GM13977 (cell line): ENCODE measurements at regions of chr21 and their contacts with region 1.

Region 1: GRCh38 chr21:30463713-30464112 is 16.5 kb downstream of the KRTAP19-1 start:
- DNase-seq: no peak
- CTCF ChIP-seq: no peak

Region 2: DNA sequence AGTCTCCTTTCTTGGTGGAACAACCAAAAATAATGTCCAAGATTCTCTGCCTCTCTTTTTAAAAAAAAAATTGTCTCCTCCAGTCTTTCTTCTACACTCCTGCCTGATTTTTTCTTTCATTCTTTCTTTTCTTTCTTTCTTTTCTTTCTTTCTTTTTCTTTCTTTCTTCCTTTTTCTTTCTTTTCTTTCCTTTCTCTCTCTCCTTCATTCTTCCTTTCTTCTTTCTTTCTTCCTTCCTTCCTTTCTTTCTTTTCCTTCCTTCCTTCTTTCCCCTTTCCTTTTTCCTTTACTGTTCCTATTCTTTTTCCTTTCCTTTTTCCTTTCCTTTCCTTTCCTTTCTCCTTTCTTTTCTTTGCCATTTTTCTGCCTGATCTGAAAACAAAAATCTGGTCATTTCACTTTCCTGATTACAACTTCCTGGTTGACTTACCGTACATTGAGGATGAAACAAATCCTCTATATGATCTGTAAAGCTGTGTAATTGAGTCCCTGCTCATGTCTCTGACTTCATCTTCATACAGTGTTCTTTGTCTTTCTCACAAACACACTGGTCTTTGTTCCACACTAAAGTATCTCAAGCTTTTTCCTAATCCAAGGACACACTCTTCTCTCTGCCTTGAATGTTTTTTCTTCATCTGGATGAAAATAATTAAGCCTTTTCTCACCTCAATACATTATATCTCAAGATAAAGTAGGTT is 109.3 kb before region 1 on chr21:
- in situ Hi-C with region 1: loop called (anchors 25 kb)
- DNase-seq: no peak
- CTCF ChIP-seq: no peak